ENCODE measurements at regions of chr14 and their contacts with region 1.

Region 1: GRCh38 chr14:78448164-78449094 is 278.3 kb downstream of the NRXN3 start:
- DNase-seq: peak; percentile 38 to 94 (median 72)

Region 2: GRCh38 chr14:78566026-78566858 is 117.8 kb after region 1 on chr14:
- intact Hi-C with region 1: loop called (anchors 1 kb)
- DNase-seq: peak; percentile 67 to 97 (median 90)